HEK293 (cell line): ENCODE measurements at regions of chr7 and their contacts with region 1.

Region 1: DNA sequence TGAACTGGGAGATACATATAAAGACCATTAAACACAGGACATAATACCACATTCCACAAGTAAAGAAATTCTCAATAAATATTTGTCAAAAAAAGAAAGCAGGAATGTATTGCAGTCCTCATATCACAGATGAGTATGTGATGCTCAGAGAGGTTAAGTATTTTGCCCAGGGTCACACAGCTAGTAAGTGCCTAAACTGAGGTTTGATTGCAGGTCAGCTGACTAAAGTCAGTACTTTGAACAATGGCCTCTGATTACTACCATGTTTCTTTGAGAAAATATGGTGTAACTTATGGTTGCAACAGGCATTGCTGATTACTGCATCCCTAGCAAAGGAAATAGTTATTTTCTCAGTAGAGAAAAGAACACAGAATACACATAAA is 267.1 kb downstream of the ELMO1 start:
- H3K4me3 ChIP-seq: no peak overlapping the region
- H3K27ac ChIP-seq: no peak overlapping the region
- H3K4me1 ChIP-seq: no peaks in the 10 kb centered on the region
- CTCF ChIP-seq: no peak

Region 2: GRCh38 chr7:36487756-36488336 is 693.7 kb before region 1 on chr7:
- CTCF ChIA-PET with region 1: interaction called, 76 read pairs
- POLR2A ChIA-PET with region 1: no interaction called
- H3K4me3 ChIP-seq: no peak overlapping the region
- H3K27ac ChIP-seq: no peak overlapping the region
- H3K4me1 ChIP-seq: no peaks in the 10 kb centered on the region
- CTCF ChIP-seq: peak; percentile 32; the same call in 1 of the 2 replicates

Region 3: GRCh38 chr7:36967387-36967786 is 214.2 kb before region 1 on chr7:
- CTCF ChIA-PET with region 1: interaction called, 101 read pairs
- POLR2A ChIA-PET with region 1: interaction called, 10 read pairs
- H3K4me3 ChIP-seq: no peak overlapping the region
- H3K27ac ChIP-seq: no peak overlapping the region
- H3K4me1 ChIP-seq: peaks cover 8% of the 10 kb centered on the region
- CTCF ChIP-seq: no peak

Region 4: DNA sequence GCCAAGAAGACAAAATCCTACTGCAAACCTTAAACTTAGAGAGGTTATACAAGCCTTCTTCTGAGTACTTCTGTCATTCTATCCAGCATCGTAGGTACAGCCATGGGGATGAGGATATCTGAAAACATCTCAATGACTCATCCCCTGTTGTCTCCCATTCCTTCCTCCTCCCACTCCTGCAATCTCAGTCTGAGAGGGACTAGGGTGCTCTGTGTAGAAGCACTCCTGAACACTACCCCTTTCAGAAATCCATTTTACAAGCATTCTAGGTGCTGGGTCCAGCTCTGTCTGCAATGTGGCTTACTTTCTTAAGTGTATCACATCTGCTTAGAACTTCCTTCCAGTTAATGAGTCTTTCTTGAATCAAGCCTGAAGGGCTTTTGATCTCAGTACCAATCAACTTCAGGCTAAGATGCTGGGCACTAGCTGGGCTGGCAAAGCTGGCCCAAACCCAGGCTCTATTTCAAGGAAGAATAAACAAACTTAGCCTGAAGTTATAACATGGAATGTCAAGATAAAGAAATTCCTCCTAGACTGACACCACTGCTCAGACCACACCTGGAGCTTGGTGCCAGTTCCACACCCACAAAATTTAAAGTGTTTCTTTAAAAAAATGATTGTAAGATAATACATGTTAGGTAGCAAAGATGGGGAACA is 187.0 kb before region 1 on chr7:
- CTCF ChIA-PET with region 1: interaction called, 61 read pairs
- POLR2A ChIA-PET with region 1: no interaction called
- H3K4me3 ChIP-seq: no peak overlapping the region
- H3K27ac ChIP-seq: no peak overlapping the region
- H3K4me1 ChIP-seq: no peaks in the 10 kb centered on the region
- CTCF ChIP-seq: no peak

Region 5: GRCh38 chr7:37027557-37028341 is 153.8 kb before region 1 on chr7:
- CTCF ChIA-PET with region 1: interaction called, 13 read pairs
- POLR2A ChIA-PET with region 1: no interaction called
- H3K4me3 ChIP-seq: no peak overlapping the region
- H3K27ac ChIP-seq: no peak overlapping the region
- H3K4me1 ChIP-seq: peaks cover 8% of the 10 kb centered on the region
- CTCF ChIP-seq: no peak